ENCODE measurements at regions of chr1 and their contacts with region 1.

Region 1: GRCh38 chr1:37978541-37978940 is 11.3 kb downstream of the SF3A3 start:
- DNase-seq: no peak
- ATAC-seq: no peak
- H3K4me3 Mint-ChIP-seq: no peak overlapping the region
- H3K27ac Mint-ChIP-seq: no peak overlapping the region
- H3K4me1 Mint-ChIP-seq: peaks cover 2% of the 10 kb centered on the region
- H3K27me3 Mint-ChIP-seq: no peaks in the 10 kb centered on the region
- CTCF ChIP-seq: no peak

Region 2: DNA sequence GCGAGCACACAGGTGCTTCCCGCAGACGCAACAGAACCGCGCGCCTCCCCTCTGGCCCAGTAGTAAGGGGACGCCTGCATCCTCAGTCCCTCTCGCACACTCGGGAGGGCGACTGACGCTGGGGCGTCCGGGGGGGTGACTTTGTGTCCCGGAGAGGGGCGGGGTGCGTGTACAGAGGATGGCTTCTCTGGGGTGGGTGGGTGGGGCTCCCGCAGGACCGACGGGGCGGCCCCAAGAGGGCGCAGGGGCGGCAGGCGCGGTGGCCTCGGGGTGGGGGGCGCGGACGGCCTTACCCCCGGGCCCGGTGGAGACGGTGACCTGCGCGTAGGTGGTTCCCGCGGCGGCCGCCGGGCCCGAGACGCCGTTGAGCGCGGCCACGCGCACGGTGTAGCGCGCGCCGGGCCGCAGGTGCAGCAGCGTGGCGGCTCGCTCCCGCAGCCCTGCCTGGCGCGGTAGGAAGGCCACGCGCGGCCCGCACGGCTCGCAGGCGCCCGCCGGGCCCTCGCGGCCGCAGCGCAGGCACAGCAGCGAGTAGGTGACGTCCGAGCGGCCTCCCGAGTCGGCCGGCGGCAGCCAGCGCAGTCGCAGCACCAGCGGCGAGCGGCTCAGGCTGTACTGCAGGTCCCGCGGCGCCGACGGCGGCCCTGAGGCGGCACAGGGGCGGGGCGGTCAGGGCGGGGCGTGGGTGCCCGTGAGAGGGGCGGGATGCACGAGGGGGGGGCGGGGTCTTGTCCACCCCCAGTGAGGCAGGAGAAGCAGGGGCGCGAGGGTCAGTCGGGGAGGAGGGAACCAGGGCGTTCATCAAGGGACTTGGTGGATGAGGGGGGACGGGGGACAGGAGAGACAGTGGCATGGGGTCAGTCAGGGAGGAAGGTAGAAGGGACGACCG is 225.7 kb before region 1 on chr1:
- CTCF ChIA-PET with region 1: no interaction called
- POLR2A ChIA-PET with region 1: no interaction called
- intact Hi-C with region 1: no loop called
- DNase-seq: peak; percentile 36
- ATAC-seq: peak; percentile 76
- H3K4me3 Mint-ChIP-seq: peak overlapping the region; percentile 77
- H3K27ac Mint-ChIP-seq: no peak overlapping the region
- H3K4me1 Mint-ChIP-seq: peaks cover 13% of the 10 kb centered on the region
- H3K27me3 Mint-ChIP-seq: peaks cover 39% of the 10 kb centered on the region
- CTCF ChIP-seq: no peak

Region 3: GRCh38 chr1:38834937-38835827 is 856.6 kb after region 1 on chr1:
- CTCF ChIA-PET with region 1: no interaction called
- POLR2A ChIA-PET with region 1: interaction called, 5 read pairs
- intact Hi-C with region 1: loop called (anchors 5 kb)
- DNase-seq: no peak
- ATAC-seq: peak; percentile 82
- H3K4me3 Mint-ChIP-seq: no peak overlapping the region
- H3K27ac Mint-ChIP-seq: no peak overlapping the region
- H3K4me1 Mint-ChIP-seq: peaks cover 7% of the 10 kb centered on the region
- H3K27me3 Mint-ChIP-seq: peaks cover 10% of the 10 kb centered on the region
- CTCF ChIP-seq: no peak

Measured in activated B cell treated with CpG ODN at 0.5 μM for 24 hours (primary cell).